Right ventricle myocardium superior (tissue), 1 donor: ENCODE measurements at regions of chr6 and their contacts with region 1.

Region 1: DNA sequence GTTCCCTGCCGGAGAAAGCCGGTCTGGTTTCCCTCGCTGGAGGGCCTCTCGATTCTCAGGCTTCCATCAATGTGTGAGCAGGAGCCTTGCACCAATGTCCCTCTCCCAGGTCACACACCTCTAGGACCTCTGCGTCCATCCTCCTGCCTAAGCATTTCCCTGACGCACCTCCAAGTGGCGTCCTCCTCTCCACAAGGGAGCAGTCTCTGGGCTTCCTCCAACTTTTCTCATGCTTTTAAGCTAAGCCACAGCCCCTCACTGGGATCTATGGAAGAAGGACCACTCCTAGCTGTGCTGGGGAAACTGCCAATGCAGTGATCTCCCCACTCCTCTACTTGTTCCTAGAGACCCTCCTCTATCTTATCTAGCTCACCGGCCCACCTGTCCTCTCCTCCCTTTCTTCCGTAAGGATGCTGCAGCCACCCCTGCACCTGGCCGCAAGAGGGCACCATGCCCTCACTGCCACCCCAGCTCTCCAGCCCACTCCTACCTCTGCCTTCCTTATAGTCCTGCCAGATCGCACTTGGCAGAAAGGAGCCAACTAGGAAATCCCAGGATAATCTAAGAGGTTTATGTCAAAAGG is 258.7 kb downstream of the LRFN2 start:
- DNase-seq: no peak
- ATAC-seq: peak; percentile 71

Region 2: DNA sequence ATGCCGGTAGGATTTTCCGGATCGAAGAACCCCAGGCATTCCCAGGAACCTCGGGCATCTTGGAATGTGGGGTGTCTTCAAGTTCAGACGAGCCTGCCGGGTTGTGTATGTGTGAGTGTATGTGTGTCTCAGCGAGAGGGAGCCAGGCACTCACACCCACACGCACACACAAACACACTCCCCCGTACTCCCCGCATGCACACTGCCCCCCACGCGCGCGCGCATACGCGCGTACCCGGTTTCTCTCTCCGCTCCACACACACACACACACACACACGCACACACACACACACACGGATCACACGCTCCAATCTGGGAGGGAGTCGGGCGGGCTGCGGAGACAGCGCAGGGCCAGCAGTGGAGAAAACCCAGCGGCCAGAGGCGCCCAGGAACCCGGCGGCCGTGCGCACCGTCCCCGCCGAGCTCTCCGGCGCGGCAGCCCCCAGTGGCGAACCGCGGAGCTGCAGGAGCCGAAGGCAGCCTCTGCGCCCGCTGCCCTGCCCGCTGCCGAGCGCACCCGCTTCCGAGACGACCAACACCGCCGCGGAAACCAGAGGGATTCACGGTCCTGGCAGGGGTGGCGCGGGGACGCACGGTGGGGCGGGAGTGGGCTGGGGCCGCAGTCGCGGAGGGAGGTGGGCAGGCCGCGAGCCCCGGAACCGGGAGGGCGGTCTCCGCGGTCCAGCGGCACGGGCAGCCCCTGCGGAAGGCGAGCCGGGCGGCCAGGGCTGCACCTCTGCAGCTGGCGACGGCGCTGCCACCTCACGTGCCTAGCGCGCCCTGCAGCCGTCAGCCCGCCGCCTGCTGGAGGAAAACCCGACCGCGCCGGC is 259.0 kb after region 1 on chr6 and contains the start of gene LRFN2:
- intact Hi-C with region 1: loop called (anchors 10 kb)
- DNase-seq: peak; percentile 79
- ATAC-seq: peak; percentile 97
- total RNA-seq, gene LRFN2: not detected

Region 3: DNA sequence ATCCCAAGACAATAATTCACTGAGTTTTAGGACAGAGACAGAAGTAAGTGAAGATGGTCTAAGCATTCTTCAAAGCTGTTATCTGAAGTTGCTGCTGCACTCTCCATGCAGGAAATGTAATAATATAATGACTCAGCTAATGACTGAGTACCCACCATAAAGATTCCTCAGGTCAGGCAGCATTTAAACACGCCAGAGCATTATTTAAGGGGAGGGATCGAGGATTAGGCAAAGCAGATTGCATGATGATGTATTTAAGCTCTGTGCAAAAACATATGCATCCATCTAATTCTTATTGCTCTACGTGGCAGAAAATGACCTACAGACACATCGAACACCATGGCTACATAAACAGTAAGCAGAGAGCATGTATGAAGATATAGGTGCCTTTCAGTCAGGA is 494.1 kb after region 1 on chr6:
- intact Hi-C with region 1: loop called (anchors 10 kb)
- DNase-seq: no peak
- ATAC-seq: no peak